ENCODE measurements at regions of chr1 and their contacts with region 1.

Region 1: GRCh38 chr1:54558434-54559030 is 10.5 kb downstream of the ACOT11 start:
- DNase-seq: no peak

Region 2: GRCh38 chr1:53238197-53239155 is 1320.1 kb before region 1 on chr1 and contains the start of gene MAGOH:
- intact Hi-C with region 1: loop called in 1 of 2 experiments (anchors 5 kb)
- DNase-seq: peak; percentile 99
- total RNA-seq, gene MAGOH: 24.0 to 32.2 TPM

Region 3: GRCh38 chr1:54543729-54544496 is 14.6 kb before region 1 on chr1:
- intact Hi-C with region 1: loop called in 1 of 2 experiments (anchors 1 kb)
- DNase-seq: no peak